ENCODE measurements at regions of chr9 and their contacts with region 1.

Region 1: GRCh38 chr9:68999393-69000105 is 14.4 kb downstream of the PRKACG start:
- DNase-seq: peak; percentile 70
- H3K4me3 Mint-ChIP-seq: no peak overlapping the region
- H3K27ac Mint-ChIP-seq: no peak overlapping the region
- H3K4me1 Mint-ChIP-seq: peaks cover 33% of the 10 kb centered on the region
- H3K27me3 Mint-ChIP-seq: peaks cover 6% of the 10 kb centered on the region

Region 2: GRCh38 chr9:68584189-68585033 is 415.1 kb before region 1 on chr9:
- CTCF ChIA-PET with region 1: interaction called, 20 read pairs
- POLR2A ChIA-PET with region 1: no interaction called
- DNase-seq: peak; percentile 87
- H3K4me3 Mint-ChIP-seq: no peak overlapping the region
- H3K27ac Mint-ChIP-seq: no peak overlapping the region
- H3K4me1 Mint-ChIP-seq: peaks cover 3% of the 10 kb centered on the region
- H3K27me3 Mint-ChIP-seq: peaks cover 10% of the 10 kb centered on the region

Region 3: GRCh38 chr9:68974431-68974830 is 25.1 kb before region 1 on chr9:
- CTCF ChIA-PET with region 1: interaction called, 11 read pairs
- POLR2A ChIA-PET with region 1: interaction called, 3 read pairs
- DNase-seq: peak; percentile 40
- H3K4me3 Mint-ChIP-seq: peak overlapping the region; percentile 49
- H3K27ac Mint-ChIP-seq: peak overlapping the region; percentile 81
- H3K4me1 Mint-ChIP-seq: peaks cover 63% of the 10 kb centered on the region
- H3K27me3 Mint-ChIP-seq: no peaks in the 10 kb centered on the region

Region 4: GRCh38 chr9:69019808-69020207 is 20.3 kb after region 1 on chr9:
- CTCF ChIA-PET with region 1: interaction called, 20 read pairs
- POLR2A ChIA-PET with region 1: interaction called, 3 read pairs
- DNase-seq: peak; percentile 73
- H3K4me3 Mint-ChIP-seq: peak overlapping the region; percentile 21
- H3K27ac Mint-ChIP-seq: peak overlapping the region; percentile 91
- H3K4me1 Mint-ChIP-seq: peaks cover 60% of the 10 kb centered on the region
- H3K27me3 Mint-ChIP-seq: peaks cover 21% of the 10 kb centered on the region

Measured in activated CD4-positive, alpha-beta memory T cell treated with anti-CD3 and anti-CD28 coated beads, Interleukin-2, amount 10 ng/mL, durations not matched to agents 7 days and 5 days (primary cell).